ENCODE measurements at regions of chr4 and their contacts with region 1.

Region 1: DNA sequence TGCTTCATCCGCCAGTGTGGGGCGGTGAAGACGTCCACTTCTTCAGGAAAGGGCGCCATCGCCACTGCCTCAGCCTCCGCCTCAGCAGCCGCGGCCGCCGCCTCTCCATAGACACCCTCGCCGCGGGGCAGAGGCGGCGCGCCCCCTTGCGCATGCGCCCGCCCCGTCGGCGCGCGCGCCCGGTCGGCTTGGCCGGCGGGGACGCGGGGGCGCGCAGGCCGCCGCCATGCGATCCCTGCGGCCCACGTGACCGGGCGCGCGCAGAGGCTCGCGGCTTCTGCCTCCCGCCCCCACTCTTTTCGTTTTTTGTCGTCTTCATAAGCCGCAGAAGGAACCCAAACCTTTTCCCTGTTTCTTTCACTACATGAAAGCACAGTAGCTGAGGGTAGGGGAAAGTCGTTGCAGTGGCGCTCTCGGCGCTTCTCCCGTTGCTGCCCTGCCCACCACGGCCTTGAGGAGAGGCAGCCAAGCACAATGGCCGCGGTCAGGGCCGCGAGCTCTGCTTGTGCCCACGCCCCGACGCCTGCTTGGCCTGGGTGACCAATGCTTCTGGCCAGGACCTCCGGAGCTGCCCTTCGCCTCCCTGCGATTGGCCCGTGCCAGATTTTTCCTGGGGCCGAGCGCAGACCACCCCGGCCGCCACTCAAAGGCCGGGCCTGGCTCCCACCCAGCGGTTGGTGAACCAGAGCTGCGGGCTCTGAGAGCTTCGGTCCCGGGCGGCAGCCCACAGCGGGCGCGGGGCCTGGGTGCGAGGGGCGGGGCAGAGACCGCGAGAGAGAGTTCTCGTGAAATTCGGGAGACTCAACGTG is at the start of gene FBXL5:
- DNase-seq: peak; percentile 79 to 92 (median 84)
- ATAC-seq: peak; percentile 65 to 92 (median 87)
- H3K4me3 ChIP-seq: peak within 1 kb of the TSS; percentile 66 to 91 (median 76)
- H3K27ac ChIP-seq: peak within 1 kb of the TSS; percentile 96 to 100 (median 99)
- H3K4me1 ChIP-seq: peaks cover 6 to 77% (median 38%) of the 10 kb centered on the region in 12 donors
- H3K27me3 ChIP-seq: no peaks in the 10 kb centered on the region
- CTCF ChIP-seq: no peak
- POLR2A ChIP-seq: peak in 1 of 2 donors; percentile 59
- total RNA-seq, gene FBXL5: 71.1 to 112 (median 82.1) TPM

Region 2: GRCh38 chr4:15457406-15458201 is 197.8 kb before region 1 on chr4:
- intact Hi-C with region 1: no loop called
- DNase-seq: no peak
- ATAC-seq: peak; percentile 24 to 79 (median 73)
- H3K4me3 ChIP-seq: no peak overlapping the region
- H3K27ac ChIP-seq: peak overlapping the region in 7 of 12 donors; percentile 8 to 43 (median 21)
- H3K4me1 ChIP-seq: peaks cover 0 to 24% (median 6%) of the 10 kb centered on the region in 12 donors
- H3K27me3 ChIP-seq: no peaks in the 10 kb centered on the region
- CTCF ChIP-seq: peak; percentile 64 to 86 (median 76)
- POLR2A ChIP-seq: no peak

Region 3: DNA sequence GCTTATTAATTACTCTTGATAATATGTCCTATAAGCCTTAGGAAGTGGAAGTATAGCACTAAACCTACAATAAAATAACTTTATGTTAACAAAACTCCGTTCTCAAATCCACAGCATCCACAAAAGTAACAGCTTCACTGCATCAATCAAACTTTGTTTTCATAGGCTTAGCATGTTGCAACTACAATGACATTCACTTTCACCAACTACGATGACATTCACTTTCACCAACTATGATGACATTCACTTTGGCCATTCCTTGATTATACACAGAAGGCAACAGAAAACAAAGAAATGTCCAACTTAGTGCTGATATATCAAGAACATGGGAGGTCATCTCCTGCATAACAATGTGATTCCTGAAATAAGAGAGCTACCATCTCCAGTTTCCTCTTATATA is 44.6 kb before region 1 on chr4:
- intact Hi-C with region 1: no loop called
- DNase-seq: no peak
- ATAC-seq: no peak
- H3K4me3 ChIP-seq: no peak overlapping the region
- H3K27ac ChIP-seq: no peak overlapping the region
- H3K4me1 ChIP-seq: peaks cover 0 to 6% (median 0%) of the 10 kb centered on the region in 12 donors
- H3K27me3 ChIP-seq: no peaks in the 10 kb centered on the region
- CTCF ChIP-seq: no peak
- POLR2A ChIP-seq: no peak

Region 4: GRCh38 chr4:15681207-15682015 is 26.0 kb after region 1 on chr4 and contains the start of gene FAM200B:
- intact Hi-C with region 1: loop called in 1 of 10 experiments (anchors 2 kb)
- DNase-seq: peak; percentile 98 to 100 (median 98)
- ATAC-seq: peak; percentile 98
- H3K4me3 ChIP-seq: peak within 1 kb of the TSS; percentile 27 to 86 (median 79)
- H3K27ac ChIP-seq: peak within 1 kb of the TSS; percentile 38 to 95 (median 90)
- H3K4me1 ChIP-seq: peaks cover 4 to 57% (median 24%) of the 10 kb centered on the region in 12 donors
- H3K27me3 ChIP-seq: no peaks in the 10 kb centered on the region
- CTCF ChIP-seq: peak in 6 of 12 donors; percentile 3 to 37 (median 23)
- POLR2A ChIP-seq: peak in 1 of 2 donors; percentile 81
- total RNA-seq, gene FAM200B: 23.2 to 37.7 (median 32.2) TPM